ENCODE measurements at regions of chr16 and their contacts with region 1.

Region 1: GRCh38 chr16:67883872-67884261 is 818 bp upstream of the NRN1L start:
- DNase-seq: peak; percentile 26
- ATAC-seq: peak; percentile 30
- H3K4me3 ChIP-seq: no peak overlapping the region
- H3K27ac ChIP-seq: no peak overlapping the region
- H3K4me1 ChIP-seq: peaks cover 4% of the 10 kb centered on the region; the same call in 1 of the 2 replicates
- H3K27me3 ChIP-seq: no peaks in the 10 kb centered on the region
- CTCF ChIP-seq: peak; percentile 77
- POLR2A ChIP-seq: no peak
- RAD21 ChIP-seq: peak; percentile 74

Region 2: DNA sequence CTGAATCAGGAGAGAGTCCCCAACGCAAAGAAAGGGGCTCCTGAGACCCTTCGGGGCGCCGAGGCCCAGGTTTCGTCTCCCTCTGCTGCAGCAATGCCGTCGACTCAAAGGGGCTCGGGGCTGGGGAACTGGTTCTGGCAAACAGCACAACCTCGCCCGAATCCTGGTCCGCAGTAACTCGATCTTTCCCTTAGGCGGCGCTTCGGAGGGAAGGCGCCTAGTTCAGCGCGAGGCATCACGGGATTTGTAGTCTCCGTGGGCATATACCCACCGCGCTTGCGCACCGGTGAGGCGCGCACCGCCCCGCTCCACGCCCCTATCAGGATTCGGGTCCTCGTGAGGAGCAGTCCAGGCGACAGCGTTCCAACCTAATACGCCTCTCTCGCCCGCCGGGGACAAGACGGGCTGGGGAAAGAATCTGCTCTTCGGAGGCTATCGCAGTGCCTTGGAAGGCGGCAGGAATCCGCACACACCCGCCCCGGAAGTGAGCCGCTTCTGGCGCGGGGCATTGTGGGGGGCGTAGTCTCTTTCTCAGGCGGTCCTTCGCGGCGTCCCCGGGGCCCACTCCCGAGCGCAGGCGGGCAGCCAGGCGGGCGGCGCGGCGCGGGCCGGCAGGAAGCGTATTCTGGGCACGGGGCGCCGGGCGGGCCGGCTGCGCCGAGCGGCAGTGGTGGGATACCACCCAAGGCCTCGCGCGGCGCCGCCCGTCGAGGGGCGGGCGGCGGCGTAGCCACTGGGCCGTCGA is 41.9 kb before region 1 on chr16 and contains the start of gene THAP11:
- CTCF ChIA-PET with region 1: no interaction called
- POLR2A ChIA-PET with region 1: no interaction called
- dilution Hi-C with region 1: no loop called
- in situ Hi-C with region 1: no loop called
- intact Hi-C with region 1: no loop called
- DNase-seq: peak; percentile 92
- ATAC-seq: peak; percentile 67
- H3K4me3 ChIP-seq: peak within 1 kb of the TSS; percentile 69
- H3K27ac ChIP-seq: peak within 1 kb of the TSS; percentile 91
- H3K4me1 ChIP-seq: peaks cover 13% of the 10 kb centered on the region
- H3K27me3 ChIP-seq: no peaks in the 10 kb centered on the region
- CTCF ChIP-seq: peak; percentile 96
- POLR2A ChIP-seq: peak; percentile 52; the same call in 1 of the 2 replicates
- RAD21 ChIP-seq: peak; percentile 50
- total RNA-seq, gene THAP11: 13.3 and 13.9 TPM in 2 replicates

Region 3: DNA sequence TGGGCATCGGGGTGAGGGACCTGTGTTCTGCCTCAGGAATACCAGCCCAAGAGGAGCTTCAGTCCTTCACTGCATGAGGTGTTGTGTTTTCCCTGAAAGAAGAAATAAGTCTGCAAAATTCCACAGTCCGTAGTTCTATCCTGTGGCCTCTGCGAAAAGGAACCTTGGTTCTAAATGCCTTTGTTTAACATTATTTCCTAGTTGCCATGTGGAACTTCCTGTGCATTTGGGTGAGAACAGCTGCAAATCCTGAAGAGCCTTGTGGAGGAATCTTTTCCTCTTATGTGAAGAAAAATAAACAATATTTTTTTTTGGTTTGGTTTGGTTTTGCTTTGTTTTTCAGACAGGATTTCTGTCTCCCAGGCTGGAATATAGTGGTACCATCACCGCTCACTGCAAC is 19.0 kb after region 1 on chr16:
- CTCF ChIA-PET with region 1: no interaction called
- POLR2A ChIA-PET with region 1: no interaction called
- dilution Hi-C with region 1: no loop called
- in situ Hi-C with region 1: no loop called
- intact Hi-C with region 1: loop called (anchors 1 kb)
- DNase-seq: peak; percentile 41
- ATAC-seq: peak; percentile 70
- H3K4me3 ChIP-seq: no peak overlapping the region
- H3K27ac ChIP-seq: peak overlapping the region; percentile 0; the same call in 1 of the 2 replicates
- H3K4me1 ChIP-seq: peaks cover 2% of the 10 kb centered on the region; the same call in 1 of the 2 replicates
- H3K27me3 ChIP-seq: no peaks in the 10 kb centered on the region
- CTCF ChIP-seq: no peak
- POLR2A ChIP-seq: no peak
- RAD21 ChIP-seq: no peak

Region 4: DNA sequence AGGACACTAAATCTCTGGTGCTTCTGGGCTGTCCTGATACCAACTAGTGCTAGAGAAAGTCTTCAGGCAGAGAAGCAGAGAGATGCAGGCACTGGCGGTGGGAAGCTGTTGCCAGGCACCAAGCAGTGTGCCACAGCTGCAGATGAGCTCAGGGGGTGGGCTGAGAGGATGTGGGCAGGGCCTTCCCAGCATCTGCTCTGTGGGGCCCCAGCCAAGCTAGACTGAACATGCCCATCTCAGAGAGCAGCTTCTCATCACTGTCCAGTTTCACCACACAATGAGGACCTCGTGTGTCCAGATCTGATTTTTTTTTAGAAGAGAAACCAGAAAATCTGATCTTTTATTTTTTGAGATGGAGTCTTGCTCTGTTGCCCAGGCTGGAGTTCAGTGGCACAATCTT is 26.3 kb after region 1 on chr16:
- CTCF ChIA-PET with region 1: interaction called, 14 read pairs
- POLR2A ChIA-PET with region 1: no interaction called
- dilution Hi-C with region 1: no loop called
- in situ Hi-C with region 1: no loop called
- intact Hi-C with region 1: no loop called
- DNase-seq: peak; percentile 69
- ATAC-seq: peak; percentile 97
- H3K4me3 ChIP-seq: no peak overlapping the region
- H3K27ac ChIP-seq: no peak overlapping the region
- H3K4me1 ChIP-seq: no peaks in the 10 kb centered on the region
- H3K27me3 ChIP-seq: no peaks in the 10 kb centered on the region
- CTCF ChIP-seq: no peak
- POLR2A ChIP-seq: no peak
- RAD21 ChIP-seq: no peak

Region 5: DNA sequence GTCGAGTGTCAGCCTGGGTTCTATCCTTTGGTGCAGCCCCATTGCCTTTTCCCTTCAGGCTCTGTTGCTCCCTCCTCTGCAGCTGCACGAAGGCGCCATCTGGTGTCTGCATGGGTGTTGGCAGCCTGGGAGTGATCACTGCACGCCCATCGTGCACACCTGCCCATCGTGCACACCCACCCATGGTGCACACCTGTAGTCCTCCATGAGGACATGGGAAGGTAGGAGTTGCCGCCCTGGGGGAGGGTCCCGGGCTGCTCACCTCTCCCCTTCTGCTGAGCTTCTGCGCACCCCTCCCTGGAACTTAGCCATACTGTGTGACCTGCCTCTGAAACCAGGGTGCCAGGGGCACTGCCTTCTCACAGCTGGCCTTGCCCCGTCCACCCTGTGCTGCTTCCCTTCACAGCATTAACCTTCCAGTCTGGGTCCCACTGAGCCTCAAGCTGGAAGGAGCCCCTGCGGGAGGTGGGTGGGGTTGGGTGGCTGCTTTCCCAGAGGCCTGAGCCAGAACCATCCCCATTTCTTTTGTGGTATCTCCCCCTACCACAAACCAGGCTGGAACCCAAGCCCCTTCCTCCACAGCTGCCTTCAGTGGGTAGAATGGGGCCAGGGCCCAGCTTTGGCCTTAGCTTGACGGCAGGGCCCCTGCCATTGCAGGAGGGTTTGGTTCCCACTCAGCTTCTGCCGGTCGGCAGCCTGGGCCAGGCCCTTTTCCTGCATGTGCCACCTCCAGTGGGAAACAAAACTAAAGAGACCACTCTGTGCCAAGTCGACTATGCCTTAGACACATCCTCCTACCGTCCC is 44.9 kb after region 1 on chr16:
- CTCF ChIA-PET with region 1: interaction called, 8 read pairs
- POLR2A ChIA-PET with region 1: no interaction called
- dilution Hi-C with region 1: no loop called
- in situ Hi-C with region 1: no loop called
- intact Hi-C with region 1: loop called (anchors 1 kb)
- DNase-seq: peak; percentile 43
- ATAC-seq: peak; percentile 92
- H3K4me3 ChIP-seq: no peak overlapping the region
- H3K27ac ChIP-seq: no peak overlapping the region
- H3K4me1 ChIP-seq: no peaks in the 10 kb centered on the region
- H3K27me3 ChIP-seq: no peaks in the 10 kb centered on the region
- CTCF ChIP-seq: peak; percentile 87
- POLR2A ChIP-seq: no peak
- RAD21 ChIP-seq: peak; percentile 94

Region 6: DNA sequence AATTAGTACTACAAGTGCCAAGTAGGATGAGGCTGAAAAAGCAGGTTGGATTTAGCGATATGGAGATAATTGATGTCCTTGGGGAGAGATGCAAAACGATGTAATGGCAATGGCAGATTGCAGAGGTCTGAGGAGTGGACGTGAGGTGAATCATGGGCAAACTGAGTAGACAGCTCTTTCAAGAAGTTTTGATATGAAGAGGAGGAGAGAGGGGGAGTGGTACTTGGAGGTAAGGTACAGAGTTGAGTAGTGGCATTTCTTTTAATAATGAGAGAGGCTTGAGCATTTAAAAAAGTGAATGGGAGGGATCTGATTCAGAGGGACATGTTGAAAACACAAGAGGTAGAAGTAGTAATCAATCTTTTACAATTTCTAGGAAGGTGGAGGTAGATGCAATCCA is 1409.5 kb after region 1 on chr16:
- CTCF ChIA-PET with region 1: no interaction called
- POLR2A ChIA-PET with region 1: no interaction called
- dilution Hi-C with region 1: no loop called
- in situ Hi-C with region 1: no loop called
- intact Hi-C with region 1: no loop called
- DNase-seq: no peak
- ATAC-seq: no peak
- H3K4me3 ChIP-seq: no peak overlapping the region
- H3K27ac ChIP-seq: no peak overlapping the region
- H3K4me1 ChIP-seq: peaks cover 4% of the 10 kb centered on the region
- H3K27me3 ChIP-seq: no peaks in the 10 kb centered on the region
- CTCF ChIP-seq: no peak
- POLR2A ChIP-seq: no peak
- RAD21 ChIP-seq: no peak

Measured in IMR-90 (cell line).